Calu3 (cell line): ENCODE measurements at regions of chr17 and their contacts with region 1.

Region 1: DNA sequence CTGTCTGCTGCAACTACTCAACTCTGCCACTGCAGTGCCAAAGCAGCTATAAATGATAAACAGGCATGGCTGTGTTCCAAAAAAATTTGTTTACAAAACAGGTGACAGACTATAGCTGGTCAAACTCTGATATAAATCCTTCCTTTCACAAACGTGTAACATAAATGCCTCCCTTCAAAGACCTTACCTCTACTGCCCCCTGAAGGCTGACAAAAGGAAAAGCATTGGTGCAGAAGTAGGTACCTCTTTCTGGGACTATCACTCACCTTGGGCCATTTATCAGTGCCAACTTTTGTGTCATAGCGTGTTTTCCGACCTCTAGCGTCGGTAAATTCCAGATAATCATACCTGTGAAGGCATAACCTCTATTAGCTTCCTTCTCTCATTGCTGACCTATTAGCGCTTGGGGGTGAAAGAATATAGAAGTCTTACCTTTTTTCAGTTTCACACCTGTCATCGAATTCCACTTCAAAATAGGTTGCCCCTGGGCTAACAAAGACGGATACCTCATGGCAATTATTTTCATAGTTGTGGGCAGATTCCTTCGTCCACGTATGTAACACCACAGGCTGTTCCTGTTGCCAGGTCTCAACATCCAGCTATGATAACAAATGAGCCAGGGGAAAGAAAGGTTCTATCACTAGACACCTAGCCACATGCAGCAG is 67.9 kb downstream of the ZZEF1 start:
- DNase-seq: peak; percentile 23
- H3K4me3 Mint-ChIP-seq: no peak overlapping the region
- H3K27ac Mint-ChIP-seq: no peak overlapping the region
- H3K4me1 Mint-ChIP-seq: no peaks in the 10 kb centered on the region
- H3K27me3 Mint-ChIP-seq: no peaks in the 10 kb centered on the region
- CTCF ChIP-seq: no peak

Region 2: DNA sequence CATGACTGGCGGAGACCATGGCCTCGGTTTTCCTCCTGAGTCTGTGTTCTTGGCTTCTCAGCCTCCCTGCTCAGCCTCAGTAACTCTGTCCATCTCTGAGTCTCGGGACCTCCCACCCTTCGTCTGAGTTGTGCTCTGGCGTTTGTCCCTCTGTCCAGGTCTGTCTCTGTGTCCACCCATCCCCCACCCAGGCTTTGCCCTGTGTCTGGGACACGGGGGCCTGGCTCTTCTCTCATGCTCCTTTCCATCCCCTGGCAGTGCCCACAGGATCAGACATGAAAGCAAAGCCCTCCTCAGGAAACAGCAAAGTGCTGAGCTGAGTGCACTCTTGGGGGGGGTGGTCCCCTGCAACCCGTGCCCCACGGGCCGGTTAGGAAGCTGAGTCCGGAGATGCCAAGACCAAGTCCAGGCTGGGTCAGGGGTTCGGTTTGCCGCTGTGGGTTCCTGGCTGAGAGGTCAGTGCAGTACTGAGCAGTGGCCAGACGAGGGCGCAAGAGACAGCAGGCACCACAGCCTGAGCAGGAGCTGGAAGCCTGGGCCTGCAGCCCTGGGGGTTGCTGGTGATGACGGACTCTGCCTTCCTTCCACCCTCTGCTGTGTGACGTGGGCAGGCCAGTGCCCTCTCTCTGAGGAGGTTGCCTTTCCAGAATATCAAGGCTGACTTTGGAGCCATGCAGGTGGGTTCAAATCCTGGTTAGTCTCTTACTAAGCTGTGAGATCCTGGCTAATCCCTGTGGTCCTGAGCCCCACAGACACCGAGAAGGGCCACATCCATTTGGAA is 161.2 kb before region 1 on chr17:
- CTCF ChIA-PET with region 1: interaction called, 3 read pairs
- intact Hi-C with region 1: loop called (anchors 10 kb)
- DNase-seq: peak; percentile 72
- H3K4me3 Mint-ChIP-seq: no peak overlapping the region
- H3K27ac Mint-ChIP-seq: no peak overlapping the region
- H3K4me1 Mint-ChIP-seq: no peaks in the 10 kb centered on the region
- H3K27me3 Mint-ChIP-seq: no peaks in the 10 kb centered on the region
- CTCF ChIP-seq: peak; percentile 78

Region 3: GRCh38 chr17:4110152-4110551 is 35.2 kb after region 1 on chr17:
- CTCF ChIA-PET with region 1: no interaction called
- intact Hi-C with region 1: no loop called
- DNase-seq: no peak
- H3K4me3 Mint-ChIP-seq: no peak overlapping the region
- H3K27ac Mint-ChIP-seq: no peak overlapping the region
- H3K4me1 Mint-ChIP-seq: no peaks in the 10 kb centered on the region
- H3K27me3 Mint-ChIP-seq: no peaks in the 10 kb centered on the region
- CTCF ChIP-seq: no peak

Region 4: GRCh38 chr17:4721203-4722135 is 646.5 kb after region 1 on chr17:
- CTCF ChIA-PET with region 1: no interaction called
- intact Hi-C with region 1: no loop called
- DNase-seq: peak; percentile 63
- H3K4me3 Mint-ChIP-seq: no peak overlapping the region
- H3K27ac Mint-ChIP-seq: peak overlapping the region; percentile 50
- H3K4me1 Mint-ChIP-seq: peaks cover 40% of the 10 kb centered on the region
- H3K27me3 Mint-ChIP-seq: peaks cover 27% of the 10 kb centered on the region
- CTCF ChIP-seq: no peak